Naive thymus-derived CD4-positive, alpha-beta T cell (primary cell): ENCODE measurements at regions of chr13 and their contacts with region 1.

Region 1: DNA sequence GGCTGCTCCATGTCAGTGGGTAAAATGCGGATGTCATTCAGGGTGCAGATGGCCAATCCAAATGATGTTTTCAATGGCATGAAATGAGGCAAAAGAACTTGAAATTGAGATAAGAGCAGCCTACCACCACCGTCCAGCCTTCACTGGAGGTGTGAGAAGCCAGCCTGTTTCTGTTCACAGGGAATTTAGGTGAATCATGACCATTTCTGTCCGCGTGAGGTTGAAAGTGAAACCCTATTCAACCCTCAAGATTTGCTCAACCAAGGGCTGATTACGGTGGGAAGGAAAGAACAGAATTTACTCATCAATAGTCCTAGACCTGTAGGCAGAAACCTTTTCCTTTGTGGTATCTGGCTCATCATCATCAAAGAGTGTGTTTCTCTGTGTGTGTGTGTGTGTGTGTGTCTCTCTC is 370.7 kb downstream of the COG6 start:
- DNase-seq: peak in 8 of 9 donors; percentile 8 to 63 (median 32)
- ATAC-seq: peak; percentile 77
- H3K4me3 ChIP-seq: peak overlapping the region; percentile 43
- H3K4me3 Mint-ChIP-seq: peak overlapping the region; percentile 39 to 79 (median 68)
- H3K27ac ChIP-seq: no peak overlapping the region
- H3K27ac Mint-ChIP-seq: peak overlapping the region; percentile 24 to 78 (median 44)
- H3K4me1 ChIP-seq: peaks cover 0 to 10% of the 10 kb centered on the region in 2 donors
- H3K4me1 Mint-ChIP-seq: peaks cover 6 to 34% (median 22%) of the 10 kb centered on the region in 7 donors
- H3K27me3 ChIP-seq: no peaks in the 10 kb centered on the region
- H3K27me3 Mint-ChIP-seq: peaks cover 0 to 35% (median 0%) of the 10 kb centered on the region in 5 donors

Region 2: DNA sequence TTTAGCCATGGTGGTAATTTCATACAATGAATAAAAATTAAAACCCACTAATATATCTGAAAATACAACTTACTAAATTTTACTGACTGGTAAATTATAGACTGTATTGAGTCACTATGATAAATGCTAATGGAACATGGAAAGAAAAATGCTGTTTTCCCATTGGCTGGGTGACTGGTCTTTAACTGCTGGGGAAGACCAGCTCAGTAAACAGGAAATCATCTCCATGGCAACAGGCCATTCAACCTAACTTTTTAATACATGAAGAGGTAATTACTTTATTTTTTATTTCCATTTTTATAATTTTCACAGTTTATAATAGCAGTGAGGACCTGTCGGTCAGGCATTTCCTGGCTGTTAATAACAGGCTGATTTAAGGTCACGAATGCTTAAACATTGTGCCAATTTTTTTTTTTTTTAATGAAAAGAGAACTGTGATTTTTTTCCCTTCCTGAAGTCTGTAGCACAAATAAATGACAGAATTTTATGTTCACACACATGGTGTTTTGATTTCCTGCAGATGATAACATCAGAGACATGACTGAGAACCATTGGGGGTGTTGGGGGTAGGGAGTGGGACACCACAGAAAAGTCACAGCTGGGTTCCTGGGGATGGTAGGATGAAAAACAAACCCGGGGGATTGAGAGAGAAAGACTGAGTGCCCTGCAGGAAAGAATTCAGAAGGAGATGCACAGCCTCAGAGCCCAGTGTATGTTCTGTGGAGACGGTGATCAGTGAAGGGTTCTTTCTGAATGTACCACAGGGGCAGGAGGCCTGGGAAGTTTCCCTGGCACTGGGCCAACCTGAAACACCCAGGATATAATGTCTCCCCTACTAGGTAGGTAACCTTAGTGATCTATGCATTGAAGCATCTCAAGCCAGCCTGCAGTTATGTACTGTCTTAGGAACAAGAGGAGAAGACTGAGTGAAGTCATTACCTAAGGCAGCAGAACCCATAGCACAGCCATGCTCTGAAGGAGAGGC is 73.6 kb before region 1 on chr13:
- CTCF ChIA-PET with region 1: no interaction called
- POLR2A ChIA-PET with region 1: no interaction called
- intact Hi-C with region 1: loop called in 1 of 2 experiments (anchors 2 kb)
- DNase-seq: peak in 2 of 9 donors; percentile 11 to 23
- ATAC-seq: peak; percentile 46
- H3K4me3 ChIP-seq: no peak overlapping the region
- H3K4me3 Mint-ChIP-seq: peak overlapping the region in 9 of 10 donors; percentile 13 to 74 (median 53)
- H3K27ac ChIP-seq: no peak overlapping the region
- H3K27ac Mint-ChIP-seq: peak overlapping the region; percentile 34 to 89 (median 82)
- H3K4me1 ChIP-seq: peaks cover 13 to 17% of the 10 kb centered on the region in 2 donors
- H3K4me1 Mint-ChIP-seq: peaks cover 27 to 60% (median 50%) of the 10 kb centered on the region in 7 donors
- H3K27me3 ChIP-seq: no peaks in the 10 kb centered on the region
- H3K27me3 Mint-ChIP-seq: peaks cover 0 to 6% (median 0%) of the 10 kb centered on the region in 5 donors

Region 3: DNA sequence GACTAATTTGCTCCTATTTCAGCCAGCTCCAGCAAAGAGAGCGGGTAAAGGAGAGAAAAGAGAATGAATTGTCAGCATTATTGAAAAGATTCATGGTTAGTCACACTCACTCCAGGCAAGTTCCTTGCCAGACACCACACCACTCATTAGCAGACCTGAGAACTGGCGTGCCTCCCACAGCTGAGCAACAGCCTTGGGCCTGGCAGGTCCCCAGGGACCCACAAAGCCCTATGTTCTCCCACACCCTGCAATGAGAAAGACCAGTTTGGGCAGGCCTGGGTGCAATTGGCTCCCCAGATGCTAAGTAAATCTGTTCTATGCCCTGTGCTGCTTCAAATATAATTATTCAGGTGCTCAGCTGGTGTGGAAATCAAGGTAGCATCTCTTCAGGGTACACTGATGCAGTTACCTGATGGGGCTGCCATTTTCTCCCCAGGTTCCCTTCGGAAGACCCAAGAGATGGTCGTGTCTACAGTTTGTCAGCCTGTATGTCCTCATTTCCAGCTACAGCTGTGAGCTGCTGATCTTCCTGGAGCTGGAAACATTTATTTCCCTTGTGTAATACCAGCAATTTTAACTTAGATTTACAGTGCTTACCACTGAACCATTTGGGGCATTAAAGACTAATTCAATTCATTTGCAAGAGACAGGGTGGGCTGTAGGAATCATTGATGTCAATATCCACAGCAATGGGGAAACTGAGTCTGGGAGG is 34.3 kb after region 1 on chr13:
- CTCF ChIA-PET with region 1: no interaction called
- POLR2A ChIA-PET with region 1: no interaction called
- intact Hi-C with region 1: loop called in 1 of 2 experiments (anchors 5 kb)
- DNase-seq: peak in 1 of 9 donors; percentile 35
- ATAC-seq: no peak
- H3K4me3 ChIP-seq: no peak overlapping the region
- H3K4me3 Mint-ChIP-seq: no peak overlapping the region
- H3K27ac ChIP-seq: no peak overlapping the region
- H3K27ac Mint-ChIP-seq: peak overlapping the region in 2 of 9 donors; percentile 32 to 72
- H3K4me1 ChIP-seq: no peaks in the 10 kb centered on the region
- H3K4me1 Mint-ChIP-seq: peaks cover 0 to 18% (median 7%) of the 10 kb centered on the region in 7 donors
- H3K27me3 ChIP-seq: no peaks in the 10 kb centered on the region
- H3K27me3 Mint-ChIP-seq: no peaks in the 10 kb centered on the region

Region 4: DNA sequence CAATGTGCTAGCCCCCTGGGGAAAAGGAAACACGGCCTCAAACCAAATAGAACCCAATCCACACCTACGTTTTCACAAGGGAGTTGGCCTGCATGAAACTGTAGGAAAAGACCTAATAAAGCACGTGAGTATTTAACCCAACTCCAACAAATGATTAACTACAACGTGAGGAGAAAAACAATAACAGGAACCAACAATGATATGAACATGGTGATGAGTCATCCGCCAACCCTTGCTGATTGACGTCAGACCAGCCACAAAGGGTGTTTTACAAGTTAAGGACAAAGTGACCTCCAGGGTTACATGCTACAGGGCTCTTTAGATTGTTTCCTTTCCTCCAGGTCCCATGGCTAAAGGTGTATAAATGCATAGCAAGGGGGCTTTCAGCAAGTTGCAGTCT is 89.8 kb after region 1 on chr13:
- CTCF ChIA-PET with region 1: no interaction called
- POLR2A ChIA-PET with region 1: no interaction called
- intact Hi-C with region 1: loop called in 1 of 2 experiments (anchors 5 kb)
- DNase-seq: peak in 1 of 9 donors; percentile 38
- ATAC-seq: peak; percentile 27
- H3K4me3 ChIP-seq: no peak overlapping the region
- H3K4me3 Mint-ChIP-seq: peak overlapping the region in 1 of 10 donors; percentile 51
- H3K27ac ChIP-seq: no peak overlapping the region
- H3K27ac Mint-ChIP-seq: peak overlapping the region in 1 of 9 donors; percentile 88
- H3K4me1 ChIP-seq: no peaks in the 10 kb centered on the region
- H3K4me1 Mint-ChIP-seq: peaks cover 0 to 22% (median 4%) of the 10 kb centered on the region in 7 donors
- H3K27me3 ChIP-seq: no peaks in the 10 kb centered on the region
- H3K27me3 Mint-ChIP-seq: peaks cover 0 to under 1% (median 0%) of the 10 kb centered on the region in 5 donors

Region 5: GRCh38 chr13:40613192-40613818 is 587.1 kb after region 1 on chr13:
- CTCF ChIA-PET with region 1: no interaction called
- POLR2A ChIA-PET with region 1: no interaction called
- intact Hi-C with region 1: loop called in 1 of 2 experiments (anchors 1 kb)
- DNase-seq: peak in 8 of 9 donors; percentile 44 to 76 (median 64)
- ATAC-seq: peak; percentile 86
- H3K4me3 ChIP-seq: peak overlapping the region; percentile 26
- H3K4me3 Mint-ChIP-seq: peak overlapping the region; percentile 72 to 88 (median 82)
- H3K27ac ChIP-seq: peak overlapping the region; percentile 72
- H3K27ac Mint-ChIP-seq: peak overlapping the region; percentile 76 to 98 (median 92)
- H3K4me1 ChIP-seq: peaks cover 64 to 83% of the 10 kb centered on the region in 2 donors
- H3K4me1 Mint-ChIP-seq: peaks cover 59 to 100% (median 95%) of the 10 kb centered on the region in 7 donors
- H3K27me3 ChIP-seq: no peaks in the 10 kb centered on the region
- H3K27me3 Mint-ChIP-seq: no peaks in the 10 kb centered on the region